Gastrocnemius medialis (tissue), 4 donors: ENCODE measurements at regions of chr1 and their contacts with region 1.

Region 1: DNA sequence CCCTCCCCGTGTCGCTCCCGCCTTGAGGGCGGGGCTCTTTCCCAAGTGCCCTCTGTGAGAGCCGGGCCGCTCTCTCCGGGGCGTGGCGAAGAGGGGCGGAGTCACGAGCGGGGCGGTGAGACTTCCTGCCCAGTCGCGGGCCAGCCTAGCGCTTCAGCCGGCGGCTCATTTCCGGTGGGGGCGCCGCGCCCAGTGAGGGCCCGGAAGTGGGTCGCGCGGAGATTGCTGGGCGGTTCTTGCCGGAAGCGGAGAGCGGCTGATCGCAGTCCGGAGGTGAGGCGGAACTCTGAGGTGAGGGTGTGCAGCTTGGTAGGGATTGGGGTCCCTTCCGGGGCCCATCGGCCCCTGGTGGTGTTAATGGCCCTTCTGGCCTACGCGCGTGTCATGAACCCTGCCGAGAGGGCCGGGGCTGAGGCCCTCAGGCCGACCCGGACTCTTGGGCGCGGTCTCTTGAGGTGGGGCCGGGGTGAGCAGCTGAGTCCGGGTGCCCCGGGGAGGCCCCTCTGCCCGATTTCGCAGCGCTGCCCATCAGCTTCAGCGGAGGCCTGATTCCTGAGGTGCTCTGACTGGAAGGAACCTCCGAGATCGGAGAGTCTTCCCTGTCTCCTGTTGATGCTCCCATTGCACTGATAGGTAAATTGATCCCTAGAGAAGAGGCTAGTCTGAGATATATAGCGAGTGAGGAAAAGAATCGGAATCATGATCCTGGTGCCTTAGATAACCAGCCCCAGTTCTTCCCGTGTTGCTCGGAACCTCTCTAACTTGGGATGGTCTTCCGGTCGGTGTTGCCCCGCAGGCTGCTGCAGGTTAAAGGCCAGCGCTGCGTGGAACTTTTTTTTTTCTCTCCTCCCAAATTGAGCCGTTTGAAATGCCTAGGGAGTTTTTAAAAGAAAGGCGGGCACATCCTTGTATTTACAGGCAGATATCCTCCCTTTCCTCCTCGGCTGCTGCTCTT is at the start of gene CAP1:
- DNase-seq: peak; percentile 98 to 99
- ATAC-seq: peak; percentile 86
- H3K4me3 ChIP-seq: peak within 1 kb of the TSS; percentile 96 to 98 (median 98)
- H3K27ac ChIP-seq: peak within 1 kb of the TSS; percentile 95 to 100 (median 99)
- H3K4me1 ChIP-seq: peaks cover 44 to 59% of the 10 kb centered on the region in 2 donors
- H3K27me3 ChIP-seq: no peaks in the 10 kb centered on the region
- CTCF ChIP-seq: peak in 1 of 5 experiments; percentile 8
- POLR2A ChIP-seq: peak; percentile 72 to 75
- total RNA-seq, gene CAP1: 35.5 to 67.0 (median 48.7) TPM

Region 2: GRCh38 chr1:39575191-39576015 is 465.4 kb before region 1 on chr1:
- in situ Hi-C with region 1: no loop called
- intact Hi-C with region 1: loop called (anchors 2 kb)
- DNase-seq: peak; percentile 63 to 69
- ATAC-seq: peak; percentile 9 to 28
- H3K4me3 ChIP-seq: peak overlapping the region; percentile 70 to 96 (median 78)
- H3K27ac ChIP-seq: peak overlapping the region; percentile 93 to 99 (median 96)
- H3K4me1 ChIP-seq: peaks cover 33% of the 10 kb centered on the region in 2 donors
- H3K27me3 ChIP-seq: no peaks in the 10 kb centered on the region
- CTCF ChIP-seq: no peak
- POLR2A ChIP-seq: peak in 1 of 2 donors; percentile 39

Region 3: GRCh38 chr1:39926343-39926793 is 114.4 kb before region 1 on chr1:
- in situ Hi-C with region 1: loop called in 1 of 4 experiments (anchors 10 kb)
- intact Hi-C with region 1: no loop called
- DNase-seq: no peak
- ATAC-seq: no peak
- H3K4me3 ChIP-seq: no peak overlapping the region
- H3K27ac ChIP-seq: no peak overlapping the region
- H3K4me1 ChIP-seq: no peaks in the 10 kb centered on the region
- H3K27me3 ChIP-seq: peaks cover 0 to 8% (median 6%) of the 10 kb centered on the region in 3 donors
- CTCF ChIP-seq: no peak
- POLR2A ChIP-seq: no peak

Region 4: GRCh38 chr1:40161125-40161887 is 120.5 kb after region 1 on chr1 and contains the start of gene RLF:
- in situ Hi-C with region 1: no loop called
- intact Hi-C with region 1: loop called (anchors 1 kb)
- DNase-seq: peak; percentile 88 to 92
- ATAC-seq: peak; percentile 95 to 97
- H3K4me3 ChIP-seq: peak within 1 kb of the TSS; percentile 73 to 98 (median 89)
- H3K27ac ChIP-seq: peak within 1 kb of the TSS; percentile 92 to 99 (median 96)
- H3K4me1 ChIP-seq: peaks cover 44 to 45% of the 10 kb centered on the region in 2 donors
- H3K27me3 ChIP-seq: no peaks in the 10 kb centered on the region
- CTCF ChIP-seq: no peak
- POLR2A ChIP-seq: peak; percentile 97 to 98
- total RNA-seq, gene RLF: 12.3 to 15.9 (median 15.0) TPM

Region 5: DNA sequence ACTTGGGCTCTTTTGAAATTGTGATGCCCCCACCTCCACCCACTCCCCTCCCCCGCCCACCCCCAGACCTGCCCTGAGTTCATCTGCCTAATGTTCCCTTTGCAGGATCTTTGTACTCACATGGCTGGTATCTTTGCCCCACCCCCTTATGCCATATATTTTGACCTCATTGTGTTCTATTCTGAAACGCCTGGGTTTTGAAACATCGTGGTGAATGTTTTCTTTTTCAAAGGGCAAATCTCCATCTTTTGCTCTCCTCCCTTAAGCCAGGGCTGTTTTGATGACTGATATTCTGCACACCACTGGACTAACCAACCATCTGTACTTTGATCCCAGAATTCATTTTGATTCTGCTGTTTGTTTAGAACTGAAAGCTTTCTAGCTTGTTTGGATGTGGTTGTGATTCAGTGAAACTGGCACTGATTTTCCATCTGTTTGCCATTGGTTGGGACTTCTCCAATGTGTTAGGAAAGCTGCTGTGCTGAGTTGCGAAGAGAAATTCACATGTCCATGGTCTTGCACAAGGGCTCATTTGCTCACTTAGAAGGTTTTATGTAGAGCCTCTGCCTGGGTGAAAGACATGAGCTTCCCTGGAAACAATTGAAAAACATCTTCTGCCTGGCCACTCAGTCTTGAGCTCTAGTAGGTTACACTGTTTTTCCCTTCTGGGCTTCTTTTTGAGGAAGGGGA is 349.2 kb after region 1 on chr1:
- in situ Hi-C with region 1: no loop called
- intact Hi-C with region 1: loop called (anchors 5 kb)
- DNase-seq: peak; percentile 56 to 73
- ATAC-seq: peak; percentile 85 to 89
- H3K4me3 ChIP-seq: peak overlapping the region in 2 of 4 donors; percentile 9 to 29
- H3K27ac ChIP-seq: peak overlapping the region; percentile 77 to 90 (median 84)
- H3K4me1 ChIP-seq: peaks cover 36 to 49% of the 10 kb centered on the region in 2 donors
- H3K27me3 ChIP-seq: no peaks in the 10 kb centered on the region
- CTCF ChIP-seq: no peak
- POLR2A ChIP-seq: peak; percentile 33 to 52